Heart left ventricle (tissue), 16 donors: ENCODE measurements at regions of chr2 and their contacts with region 1.

Region 1: GRCh38 chr2:45494269-45494977 is 116.6 kb downstream of the SRBD1 start:
- DNase-seq: no peak
- ATAC-seq: no peak
- H3K4me3 ChIP-seq: no peak overlapping the region
- H3K27ac ChIP-seq: no peak overlapping the region
- H3K4me1 ChIP-seq: no peaks in the 10 kb centered on the region
- H3K27me3 ChIP-seq: no peaks in the 10 kb centered on the region
- CTCF ChIP-seq: peak; percentile 66 to 88 (median 78)
- POLR2A ChIP-seq: no peak

Region 2: DNA sequence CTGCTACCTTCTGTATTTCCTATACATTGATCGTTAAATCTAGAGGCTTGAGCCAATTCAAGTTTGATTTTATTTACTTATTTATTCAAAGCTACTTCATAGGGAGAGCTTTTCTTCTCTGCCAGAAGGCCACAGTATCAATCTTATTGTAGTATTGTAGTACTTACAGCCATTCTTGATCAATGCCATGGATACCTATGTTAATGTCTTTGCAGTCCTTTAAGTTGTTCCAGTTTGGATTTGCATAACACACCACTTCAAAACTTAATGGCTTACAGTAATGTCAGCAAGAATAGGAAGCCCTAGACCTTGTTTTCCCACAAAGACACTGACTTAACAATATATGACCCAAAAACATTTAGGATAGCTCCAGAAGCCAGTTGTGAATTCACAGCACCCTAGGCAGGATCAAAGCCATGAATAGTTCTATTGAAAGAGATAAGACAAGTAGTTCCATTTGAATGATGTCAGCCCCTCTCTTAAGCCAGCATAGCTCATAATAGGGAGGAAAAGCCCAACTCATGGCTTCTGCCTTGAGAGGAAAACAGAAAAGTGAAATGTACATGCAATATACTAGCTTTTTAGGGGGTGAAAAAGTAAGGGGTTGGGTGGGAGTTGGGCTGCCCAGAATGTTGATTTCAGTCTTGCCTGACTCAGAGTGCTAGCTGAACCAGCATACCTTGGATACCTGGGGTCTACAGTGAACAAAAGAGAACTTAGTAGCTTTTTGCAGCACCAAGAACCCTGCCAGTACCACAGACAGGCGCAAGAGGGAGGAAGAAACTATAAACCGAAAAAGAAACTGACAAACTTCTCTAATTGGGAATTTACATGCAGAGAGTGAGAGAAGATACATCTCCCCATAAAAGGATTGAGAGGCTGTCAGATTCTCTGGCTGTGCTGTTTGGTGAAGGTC is 1031.2 kb before region 1 on chr2:
- intact Hi-C with region 1: loop called in 1 of 10 experiments (anchors 5 kb)
- DNase-seq: no peak
- ATAC-seq: peak in 2 of 4 donors; percentile 46 to 60
- H3K4me3 ChIP-seq: no peak overlapping the region
- H3K27ac ChIP-seq: no peak overlapping the region
- H3K4me1 ChIP-seq: peaks cover 0 to 6% (median 0%) of the 10 kb centered on the region in 12 donors
- H3K27me3 ChIP-seq: no peaks in the 10 kb centered on the region
- CTCF ChIP-seq: no peak
- POLR2A ChIP-seq: no peak

Region 3: GRCh38 chr2:44981136-44982108 is 513.0 kb before region 1 on chr2:
- intact Hi-C with region 1: loop called (anchors 1 to 2 kb)
- DNase-seq: peak; percentile 67 to 83 (median 78)
- ATAC-seq: peak in 3 of 4 donors; percentile 77 to 84 (median 77)
- H3K4me3 ChIP-seq: no peak overlapping the region
- H3K27ac ChIP-seq: no peak overlapping the region
- H3K4me1 ChIP-seq: peaks cover 0 to 5% (median 0%) of the 10 kb centered on the region in 12 donors
- H3K27me3 ChIP-seq: peaks cover 0 to 54% (median 10%) of the 10 kb centered on the region in 9 donors
- CTCF ChIP-seq: peak; percentile 72 to 95 (median 85)
- POLR2A ChIP-seq: no peak